ENCODE measurements at regions of chr16 and their contacts with region 1.

Region 1: GRCh38 chr16:12819126-12820117 is 15.7 kb upstream of the CPPED1 start:
- DNase-seq: peak; percentile 60 to 85 (median 79)
- ATAC-seq: peak; percentile 45 to 61
- H3K4me3 ChIP-seq: no peak overlapping the region
- H3K27ac ChIP-seq: no peak overlapping the region
- H3K4me1 ChIP-seq: no peaks in the 10 kb centered on the region
- H3K27me3 ChIP-seq: no peaks in the 10 kb centered on the region

Region 2: GRCh38 chr16:12455287-12455798 is 364.1 kb before region 1 on chr16:
- intact Hi-C with region 1: loop called (anchors 2 to 10 kb)
- DNase-seq: peak; percentile 56 to 83 (median 80)
- ATAC-seq: peak; percentile 77 to 82
- H3K4me3 ChIP-seq: no peak overlapping the region
- H3K27ac ChIP-seq: no peak overlapping the region
- H3K4me1 ChIP-seq: no peaks in the 10 kb centered on the region
- H3K27me3 ChIP-seq: no peaks in the 10 kb centered on the region

Region 3: DNA sequence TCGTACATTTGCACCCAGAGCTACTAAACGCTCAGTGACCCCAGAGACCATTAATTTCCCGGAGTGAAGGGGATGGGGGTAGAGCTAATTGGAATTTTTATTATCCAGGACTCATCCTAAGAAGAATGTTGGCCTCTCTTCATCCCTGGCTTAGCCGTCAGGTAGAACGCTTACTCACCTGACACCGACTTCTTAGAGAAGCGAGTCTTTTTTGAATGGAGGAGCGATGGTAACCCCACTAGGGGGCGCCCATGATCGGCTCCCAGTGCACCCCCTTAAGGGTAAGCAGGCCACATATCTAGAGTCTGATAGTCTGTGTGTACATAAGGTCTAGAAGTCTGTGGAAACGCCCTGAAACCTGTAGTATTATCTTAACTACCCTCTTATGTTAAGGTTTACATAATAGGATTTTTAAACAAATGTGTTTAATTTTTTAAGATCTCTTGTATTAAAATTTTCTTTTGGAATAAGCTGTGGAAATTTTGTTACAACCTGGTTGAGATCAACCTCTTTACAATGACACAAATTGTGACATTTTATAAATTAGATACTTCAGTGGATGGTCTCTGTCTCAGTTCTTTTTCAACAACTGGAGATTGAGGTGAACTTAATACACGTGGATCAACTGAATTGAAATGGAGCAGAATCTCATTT is 245.6 kb before region 1 on chr16:
- intact Hi-C with region 1: loop called in 2 of 4 experiments (anchors 10 kb)
- DNase-seq: peak; percentile 44 to 71 (median 69)
- ATAC-seq: peak; percentile 44 to 46
- H3K4me3 ChIP-seq: no peak overlapping the region
- H3K27ac ChIP-seq: no peak overlapping the region
- H3K4me1 ChIP-seq: no peaks in the 10 kb centered on the region
- H3K27me3 ChIP-seq: no peaks in the 10 kb centered on the region

Region 4: GRCh38 chr16:12675852-12676251 is 143.6 kb before region 1 on chr16:
- intact Hi-C with region 1: no loop called
- DNase-seq: no peak
- ATAC-seq: no peak
- H3K4me3 ChIP-seq: no peak overlapping the region
- H3K27ac ChIP-seq: no peak overlapping the region
- H3K4me1 ChIP-seq: no peaks in the 10 kb centered on the region
- H3K27me3 ChIP-seq: no peaks in the 10 kb centered on the region

Region 5: GRCh38 chr16:12907670-12908233 is 88.3 kb after region 1 on chr16:
- intact Hi-C with region 1: no loop called
- DNase-seq: no peak
- ATAC-seq: no peak
- H3K4me3 ChIP-seq: no peak overlapping the region
- H3K27ac ChIP-seq: no peak overlapping the region
- H3K4me1 ChIP-seq: no peaks in the 10 kb centered on the region
- H3K27me3 ChIP-seq: no peaks in the 10 kb centered on the region